ENCODE measurements at regions of chr5 and their contacts with region 1.

Region 1: GRCh38 chr5:179585941-179586655 is 35.7 kb downstream of the RUFY1 start:
- DNase-seq: no peak
- H3K4me3 ChIP-seq: no peak overlapping the region
- H3K27ac ChIP-seq: no peak overlapping the region
- H3K4me1 ChIP-seq: no peaks in the 10 kb centered on the region
- H3K27me3 ChIP-seq: no peaks in the 10 kb centered on the region
- CTCF ChIP-seq: no peak
- EP300 ChIP-seq: no peak
- POLR2A ChIP-seq: no peak
- RAD21 ChIP-seq: no peak

Region 2: DNA sequence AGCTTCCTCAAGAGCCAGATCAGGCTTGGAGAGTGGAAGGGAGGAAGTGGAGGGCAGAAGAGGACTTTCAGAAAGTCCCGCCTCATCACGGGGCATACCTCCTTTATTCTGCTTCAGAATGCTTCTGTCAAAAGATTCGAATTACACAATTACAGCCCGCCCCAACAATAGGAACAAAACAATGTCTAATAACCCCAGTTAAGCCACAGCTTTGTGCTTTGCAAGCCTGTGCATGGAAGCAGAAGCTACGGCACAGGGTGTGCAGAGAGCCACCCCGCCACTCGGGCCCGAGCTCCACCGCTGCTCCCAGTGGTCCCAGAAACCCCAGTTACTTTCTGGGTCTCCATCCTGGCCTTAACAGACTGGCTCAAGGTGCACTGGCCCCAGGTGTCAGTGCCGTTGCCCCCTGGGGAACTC is 13.9 kb after region 1 on chr5:
- CTCF ChIA-PET with region 1: interaction called, 3 read pairs
- POLR2A ChIA-PET with region 1: interaction called, 10 read pairs
- DNase-seq: no peak
- H3K4me3 ChIP-seq: no peak overlapping the region
- H3K27ac ChIP-seq: no peak overlapping the region
- H3K4me1 ChIP-seq: no peaks in the 10 kb centered on the region
- H3K27me3 ChIP-seq: no peaks in the 10 kb centered on the region
- CTCF ChIP-seq: no peak
- EP300 ChIP-seq: no peak
- POLR2A ChIP-seq: no peak
- RAD21 ChIP-seq: no peak

Region 3: DNA sequence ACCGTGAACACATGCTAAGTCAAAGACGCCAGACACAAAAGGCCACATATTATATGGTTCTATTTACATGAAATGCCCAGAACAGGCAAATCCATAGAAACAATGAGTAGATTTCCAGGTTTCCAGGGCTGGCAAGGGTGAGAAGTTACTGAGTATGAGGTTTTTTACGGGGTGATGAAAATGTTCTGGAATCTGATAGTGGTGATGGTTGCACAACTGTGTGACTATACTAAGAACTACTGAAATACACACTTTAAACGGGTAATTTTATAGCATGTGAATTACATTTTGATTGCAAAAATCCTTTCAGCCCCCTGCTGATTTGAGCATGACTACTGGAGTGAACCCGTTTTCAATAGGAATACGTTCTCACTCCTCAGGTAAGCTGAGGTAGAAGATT is 368.3 kb after region 1 on chr5:
- CTCF ChIA-PET with region 1: no interaction called
- POLR2A ChIA-PET with region 1: no interaction called
- DNase-seq: peak in 1 of 2 experiments; percentile 7
- H3K4me3 ChIP-seq: no peak overlapping the region
- H3K27ac ChIP-seq: no peak overlapping the region
- H3K4me1 ChIP-seq: no peaks in the 10 kb centered on the region
- H3K27me3 ChIP-seq: no peaks in the 10 kb centered on the region
- CTCF ChIP-seq: no peak
- EP300 ChIP-seq: no peak
- POLR2A ChIP-seq: no peak
- RAD21 ChIP-seq: no peak

Measured in H1 (cell line).